Ascending aorta (tissue), 2 donors: ENCODE measurements at regions of chr3 and their contacts with region 1.

Region 1: DNA sequence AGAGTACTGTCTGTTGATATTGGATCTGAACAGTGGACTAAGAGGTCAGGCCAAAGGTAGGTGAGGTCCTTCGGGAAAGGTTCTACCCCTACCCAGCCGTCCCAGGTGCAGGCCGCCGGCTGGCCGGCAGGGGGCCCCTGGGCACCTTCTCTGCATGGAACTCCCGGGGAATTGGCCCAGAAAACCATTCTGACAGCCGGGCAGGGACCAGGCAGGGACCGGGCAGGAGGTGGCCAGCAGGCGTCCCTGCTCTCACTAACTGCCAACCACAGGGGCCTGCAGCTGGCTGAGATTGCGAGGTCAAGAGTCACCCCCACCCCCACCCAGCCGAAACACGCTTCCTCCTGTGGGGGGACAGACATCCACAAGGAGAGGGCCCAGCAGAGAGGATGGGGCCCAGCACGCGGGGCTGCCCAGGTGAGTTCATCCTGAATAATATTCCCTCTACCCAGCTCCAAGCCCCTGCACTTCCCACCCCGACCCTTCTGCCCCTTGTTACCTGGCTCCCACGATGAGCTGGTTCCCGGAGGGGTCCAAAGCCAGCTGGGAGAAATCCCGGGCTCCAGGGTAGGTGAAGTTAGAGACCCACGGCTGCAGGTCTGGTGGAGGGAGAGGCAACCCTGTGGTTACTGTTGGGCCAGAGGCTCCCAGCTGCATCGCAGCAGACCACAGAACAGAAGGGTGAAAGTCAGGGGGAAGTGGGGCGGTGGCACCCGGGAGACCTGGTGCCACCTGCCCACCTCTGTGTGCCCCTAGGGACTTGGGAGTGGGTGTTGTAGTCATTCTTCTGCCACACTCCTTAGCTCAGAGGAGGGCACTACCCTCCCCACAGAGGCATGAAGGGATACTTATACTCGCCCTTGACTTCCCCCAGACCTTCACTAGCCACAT is 84.4 kb downstream of the SEMA5B start:
- DNase-seq: peak in 1 of 2 donors; percentile 88
- H3K4me3 ChIP-seq: no peak overlapping the region
- H3K27ac ChIP-seq: no peak overlapping the region
- H3K4me1 ChIP-seq: peaks cover 0 to 12% of the 10 kb centered on the region in 2 donors
- H3K27me3 ChIP-seq: no peaks in the 10 kb centered on the region
- CTCF ChIP-seq: peak; percentile 86 to 98 (median 96)

Region 2: DNA sequence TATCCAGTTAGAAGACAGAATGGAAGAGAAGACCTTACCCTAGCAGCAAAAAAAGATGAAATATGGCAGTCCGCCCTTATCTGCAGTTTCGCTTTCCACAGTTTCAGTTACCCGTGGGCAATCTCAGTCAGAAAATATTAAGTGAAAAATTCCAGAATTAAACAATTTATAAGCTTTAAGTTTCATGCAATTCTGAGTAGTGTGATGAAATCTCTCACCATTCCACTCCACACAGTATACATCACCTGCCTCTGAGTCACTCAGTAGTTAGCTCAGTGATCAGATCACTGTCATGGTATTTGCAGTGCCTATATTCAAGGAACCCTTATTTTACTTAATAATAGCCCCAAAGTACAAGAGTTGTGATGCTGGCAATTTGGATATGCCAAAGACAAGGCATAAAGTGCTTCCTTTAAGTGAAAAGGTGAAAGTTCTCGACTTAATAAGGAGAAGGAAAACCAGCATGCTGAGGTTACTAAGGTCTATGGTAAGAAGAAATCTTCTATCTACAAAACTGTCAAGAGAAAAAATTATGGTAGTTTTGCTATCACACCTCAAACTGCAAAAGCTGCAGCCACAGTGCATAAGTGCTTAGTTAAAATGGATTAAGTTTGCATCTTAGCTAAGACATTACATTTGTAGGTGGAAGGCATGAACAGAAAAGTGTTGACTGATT is 197.7 kb before region 1 on chr3:
- intact Hi-C with region 1: no loop called
- DNase-seq: no peak
- H3K4me3 ChIP-seq: no peak overlapping the region
- H3K27ac ChIP-seq: no peak overlapping the region
- H3K4me1 ChIP-seq: no peaks in the 10 kb centered on the region
- H3K27me3 ChIP-seq: no peaks in the 10 kb centered on the region
- CTCF ChIP-seq: no peak

Region 3: GRCh38 chr3:122982216-122983185 is 39.3 kb after region 1 on chr3:
- intact Hi-C with region 1: loop called (anchors 5 kb)
- DNase-seq: no peak
- H3K4me3 ChIP-seq: no peak overlapping the region
- H3K27ac ChIP-seq: no peak overlapping the region
- H3K4me1 ChIP-seq: peaks cover 8 to 19% of the 10 kb centered on the region in 2 donors
- H3K27me3 ChIP-seq: no peaks in the 10 kb centered on the region
- CTCF ChIP-seq: peak in 1 of 3 experiments; percentile 18

Region 4: GRCh38 chr3:123028233-123028828 is 85.1 kb after region 1 on chr3:
- intact Hi-C with region 1: loop called (anchors 1 kb)
- DNase-seq: peak in 1 of 2 donors; percentile 68
- H3K4me3 ChIP-seq: peak overlapping the region; percentile 64 to 65
- H3K27ac ChIP-seq: no peak overlapping the region
- H3K4me1 ChIP-seq: peaks cover 8 to 13% of the 10 kb centered on the region in 2 donors
- H3K27me3 ChIP-seq: no peaks in the 10 kb centered on the region
- CTCF ChIP-seq: peak; percentile 43 to 75 (median 52)

Region 5: GRCh38 chr3:123201566-123202427 is 258.6 kb after region 1 on chr3 and contains the start of gene SEC22A:
- intact Hi-C with region 1: loop called (anchors 5 kb)
- DNase-seq: peak; percentile 71 to 96
- H3K4me3 ChIP-seq: peak within 1 kb of the TSS; percentile 74 to 83
- H3K27ac ChIP-seq: peak within 1 kb of the TSS; percentile 67 to 84
- H3K4me1 ChIP-seq: peaks cover 0 to 3% of the 10 kb centered on the region in 2 donors
- H3K27me3 ChIP-seq: no peaks in the 10 kb centered on the region
- CTCF ChIP-seq: no peak
- total RNA-seq, gene SEC22A: 6.4 TPM

Region 6: GRCh38 chr3:123258811-123259420 is 315.7 kb after region 1 on chr3:
- intact Hi-C with region 1: loop called (anchors 1 kb)
- DNase-seq: no peak
- H3K4me3 ChIP-seq: no peak overlapping the region
- H3K27ac ChIP-seq: no peak overlapping the region
- H3K4me1 ChIP-seq: no peaks in the 10 kb centered on the region
- H3K27me3 ChIP-seq: no peaks in the 10 kb centered on the region
- CTCF ChIP-seq: peak; percentile 51 to 62 (median 58)

Region 7: DNA sequence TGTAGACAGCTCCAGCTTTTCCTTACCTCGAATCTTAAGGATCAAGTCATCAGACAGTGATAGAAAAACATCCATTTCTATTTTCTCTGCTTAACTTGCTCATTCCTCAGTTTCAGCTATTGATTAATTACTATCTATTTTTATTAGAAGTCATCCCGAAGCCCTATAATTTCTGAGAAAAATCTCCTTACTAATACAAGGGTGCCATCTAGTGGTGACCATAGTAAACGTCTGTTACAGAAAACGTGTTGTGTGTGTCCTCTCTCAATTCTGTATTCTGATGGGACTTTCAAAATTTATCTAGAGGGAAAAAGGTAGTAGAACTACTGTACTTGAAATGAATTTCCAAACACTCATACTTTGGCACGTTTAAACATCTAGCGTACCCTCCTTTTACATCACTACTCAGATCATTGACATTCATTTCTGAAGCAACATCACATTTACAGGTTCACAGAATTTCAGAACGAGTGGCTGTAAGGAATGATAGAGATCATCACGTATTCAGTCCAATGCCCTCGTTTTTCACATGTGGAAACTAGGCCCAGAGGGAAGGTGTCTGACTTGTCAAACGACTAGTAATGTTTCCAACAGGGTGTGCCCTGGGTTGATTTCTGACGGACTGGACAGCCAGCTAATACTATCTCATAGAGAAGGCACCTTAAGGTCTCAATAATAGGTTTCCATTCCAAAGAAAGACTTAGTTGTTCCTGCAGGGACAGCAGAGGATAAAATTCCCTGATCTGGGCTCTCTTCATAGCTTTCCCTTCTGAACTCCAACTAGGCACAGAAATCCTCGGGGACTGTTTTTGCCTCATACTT is 616.1 kb after region 1 on chr3:
- intact Hi-C with region 1: loop called (anchors 2 kb)
- DNase-seq: no peak
- H3K4me3 ChIP-seq: no peak overlapping the region
- H3K27ac ChIP-seq: no peak overlapping the region
- H3K4me1 ChIP-seq: no peaks in the 10 kb centered on the region
- H3K27me3 ChIP-seq: no peaks in the 10 kb centered on the region
- CTCF ChIP-seq: peak; percentile 66 to 81 (median 80)